CD8-positive, alpha-beta memory T cell (primary cell): ENCODE measurements at regions of chr2 and their contacts with region 1.

Region 1: DNA sequence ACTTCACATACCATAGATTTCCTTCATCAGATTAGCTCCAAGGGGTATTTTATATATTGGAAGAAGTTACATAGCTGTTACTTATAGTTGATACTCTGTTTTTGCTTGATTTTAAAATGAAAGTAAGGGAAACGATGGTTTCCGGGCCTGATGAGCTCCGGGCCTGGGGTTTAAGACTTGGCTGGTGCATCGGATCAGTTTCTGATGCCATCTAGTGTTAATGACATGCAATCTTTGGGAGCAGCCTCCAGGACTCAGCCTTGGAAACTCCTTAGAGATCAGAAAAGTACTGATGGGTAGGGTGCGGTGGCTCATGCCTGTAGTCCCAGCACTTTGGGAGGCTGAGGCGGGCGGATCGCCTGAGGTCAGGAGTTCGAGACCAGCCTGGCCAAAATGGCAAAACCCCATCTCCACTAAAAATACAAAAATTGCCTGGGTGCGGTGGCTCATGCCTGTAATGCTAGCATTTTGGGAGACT is 47.1 kb upstream of the CNOT11 start:
- DNase-seq: peak in 4 of 5 donors; percentile 9 to 55 (median 35)
- H3K4me3 ChIP-seq: no peak overlapping the region
- H3K4me3 Mint-ChIP-seq: peak overlapping the region in 6 of 7 donors; percentile 63 to 77 (median 70)
- H3K27ac ChIP-seq: no peak overlapping the region
- H3K27ac Mint-ChIP-seq: peak overlapping the region in 7 of 8 donors; percentile 39 to 85 (median 56)
- H3K4me1 ChIP-seq: no peaks in the 10 kb centered on the region
- H3K4me1 Mint-ChIP-seq: peaks cover 8 to 15% (median 14%) of the 10 kb centered on the region in 3 donors
- H3K27me3 ChIP-seq: no peaks in the 10 kb centered on the region
- H3K27me3 Mint-ChIP-seq: peaks cover 0 to 3% of the 10 kb centered on the region in 2 donors

Region 2: GRCh38 chr2:101012706-101013181 is 192.8 kb before region 1 on chr2:
- CTCF ChIA-PET with region 1: interaction called, 11 read pairs
- POLR2A ChIA-PET with region 1: no interaction called
- DNase-seq: peak in 3 of 5 donors; percentile 21 to 38 (median 23)
- H3K4me3 ChIP-seq: no peak overlapping the region
- H3K4me3 Mint-ChIP-seq: no peak overlapping the region
- H3K27ac ChIP-seq: no peak overlapping the region
- H3K27ac Mint-ChIP-seq: peak overlapping the region in 2 of 8 donors; percentile 12 to 40
- H3K4me1 ChIP-seq: no peaks in the 10 kb centered on the region
- H3K4me1 Mint-ChIP-seq: peaks cover 17 to 33% (median 18%) of the 10 kb centered on the region in 3 donors
- H3K27me3 ChIP-seq: no peaks in the 10 kb centered on the region
- H3K27me3 Mint-ChIP-seq: no peaks in the 10 kb centered on the region

Region 3: GRCh38 chr2:101252408-101253012 is 47.0 kb after region 1 on chr2 and contains the start of gene CNOT11:
- CTCF ChIA-PET with region 1: interaction called, 13 read pairs
- POLR2A ChIA-PET with region 1: no interaction called
- DNase-seq: peak; percentile 97 to 99 (median 98)
- H3K4me3 ChIP-seq: peak within 1 kb of the TSS; percentile 81
- H3K4me3 Mint-ChIP-seq: peak within 1 kb of the TSS; percentile 91 to 97 (median 95)
- H3K27ac ChIP-seq: peak within 1 kb of the TSS; percentile 98
- H3K27ac Mint-ChIP-seq: peak within 1 kb of the TSS; percentile 92 to 98 (median 95)
- H3K4me1 ChIP-seq: peaks cover 36% of the 10 kb centered on the region
- H3K4me1 Mint-ChIP-seq: peaks cover 39 to 55% (median 47%) of the 10 kb centered on the region in 3 donors
- H3K27me3 ChIP-seq: no peaks in the 10 kb centered on the region
- H3K27me3 Mint-ChIP-seq: peaks cover 0 to 5% of the 10 kb centered on the region in 2 donors
- total RNA-seq, gene CNOT11: 60.9 to 67.4 TPM